Endothelial cell of umbilical vein (primary cell): ENCODE measurements at regions of chr16 and their contacts with region 1.

Region 1: GRCh38 chr16:15874745-15875314 is 13.6 kb downstream of the CEP20 start:
- DNase-seq: peak; percentile 84
- H3K4me3 ChIP-seq: no peak overlapping the region
- H3K27ac ChIP-seq: no peak overlapping the region
- H3K4me1 ChIP-seq: peaks cover 9% of the 10 kb centered on the region
- H3K27me3 ChIP-seq: no peaks in the 10 kb centered on the region
- CTCF ChIP-seq: peak; percentile 83 to 87
- POLR2A ChIP-seq: no peak

Region 2: DNA sequence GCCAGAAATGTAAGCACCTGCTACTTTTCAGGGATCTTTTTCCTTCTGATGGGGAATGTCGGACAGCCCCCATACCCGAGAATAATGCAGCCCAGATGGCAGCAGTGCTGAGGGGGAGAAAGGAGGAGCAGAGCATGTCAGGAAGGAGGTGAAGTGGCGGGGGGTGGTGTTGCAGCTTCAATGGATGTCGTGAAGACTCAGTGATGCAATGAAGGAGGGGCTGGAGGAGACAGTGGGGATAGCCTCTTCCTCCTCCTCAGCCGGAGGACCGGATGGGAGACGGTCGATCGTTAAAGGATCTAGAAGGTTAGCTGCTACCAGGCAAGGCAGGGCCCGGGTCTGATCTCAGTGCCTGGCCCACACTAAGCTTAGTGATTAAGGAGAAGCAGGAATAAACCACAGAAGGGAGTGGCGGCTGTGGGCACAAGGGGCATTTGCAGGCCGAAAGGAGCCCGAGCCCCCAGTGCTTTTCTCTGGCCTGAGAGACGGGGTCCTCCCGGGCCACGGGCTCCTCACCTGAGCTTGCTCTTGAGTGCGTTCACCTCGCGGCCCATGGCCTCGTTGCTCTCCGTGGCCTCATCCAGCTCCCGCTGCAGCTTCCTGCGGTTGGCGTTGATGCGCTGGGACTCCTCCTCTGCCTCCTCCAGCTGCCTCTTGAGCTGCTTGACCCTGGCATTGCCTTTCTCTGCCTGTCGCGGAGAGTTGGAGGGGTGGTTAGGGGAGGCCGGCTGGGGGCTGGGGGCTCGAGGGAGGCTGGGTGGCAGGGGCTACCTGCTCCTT is 160.2 kb before region 1 on chr16:
- CTCF ChIA-PET with region 1: no interaction called
- POLR2A ChIA-PET with region 1: no interaction called
- dilution Hi-C with region 1: no loop called
- intact Hi-C with region 1: no loop called
- DNase-seq: no peak
- H3K4me3 ChIP-seq: no peak overlapping the region
- H3K27ac ChIP-seq: no peak overlapping the region
- H3K4me1 ChIP-seq: no peaks in the 10 kb centered on the region
- H3K27me3 ChIP-seq: no peaks in the 10 kb centered on the region
- CTCF ChIP-seq: no peak
- POLR2A ChIP-seq: no peak

Region 3: GRCh38 chr16:15899538-15900100 is 24.8 kb after region 1 on chr16:
- CTCF ChIA-PET with region 1: interaction called, 17 read pairs
- POLR2A ChIA-PET with region 1: no interaction called
- dilution Hi-C with region 1: no loop called
- intact Hi-C with region 1: no loop called
- DNase-seq: no peak
- H3K4me3 ChIP-seq: no peak overlapping the region
- H3K27ac ChIP-seq: no peak overlapping the region
- H3K4me1 ChIP-seq: no peaks in the 10 kb centered on the region
- H3K27me3 ChIP-seq: no peaks in the 10 kb centered on the region
- CTCF ChIP-seq: no peak
- POLR2A ChIP-seq: no peak

Region 4: GRCh38 chr16:15996432-15997109 is 121.7 kb after region 1 on chr16:
- CTCF ChIA-PET with region 1: interaction called, 23 read pairs
- POLR2A ChIA-PET with region 1: no interaction called
- dilution Hi-C with region 1: no loop called
- intact Hi-C with region 1: no loop called
- DNase-seq: peak; percentile 89
- H3K4me3 ChIP-seq: no peak overlapping the region
- H3K27ac ChIP-seq: peak overlapping the region; percentile 91
- H3K4me1 ChIP-seq: peaks cover 50% of the 10 kb centered on the region
- H3K27me3 ChIP-seq: no peaks in the 10 kb centered on the region
- CTCF ChIP-seq: peak in 1 of 2 donors; percentile 7
- POLR2A ChIP-seq: peak; percentile 51

Region 5: GRCh38 chr16:16027728-16028310 is 153.0 kb after region 1 on chr16:
- CTCF ChIA-PET with region 1: interaction called, 37 read pairs
- POLR2A ChIA-PET with region 1: interaction called, 3 read pairs
- dilution Hi-C with region 1: no loop called
- intact Hi-C with region 1: loop called (anchors 5 kb)
- DNase-seq: peak; percentile 77
- H3K4me3 ChIP-seq: no peak overlapping the region
- H3K27ac ChIP-seq: peak overlapping the region; percentile 71
- H3K4me1 ChIP-seq: peaks cover 37% of the 10 kb centered on the region
- H3K27me3 ChIP-seq: no peaks in the 10 kb centered on the region
- CTCF ChIP-seq: no peak
- POLR2A ChIP-seq: no peak

Region 6: GRCh38 chr16:16062023-16062932 is 187.4 kb after region 1 on chr16:
- CTCF ChIA-PET with region 1: interaction called, 16 read pairs
- POLR2A ChIA-PET with region 1: no interaction called
- dilution Hi-C with region 1: no loop called
- intact Hi-C with region 1: no loop called
- DNase-seq: no peak
- H3K4me3 ChIP-seq: no peak overlapping the region
- H3K27ac ChIP-seq: no peak overlapping the region
- H3K4me1 ChIP-seq: no peaks in the 10 kb centered on the region
- H3K27me3 ChIP-seq: no peaks in the 10 kb centered on the region
- CTCF ChIP-seq: no peak
- POLR2A ChIP-seq: no peak

Region 7: DNA sequence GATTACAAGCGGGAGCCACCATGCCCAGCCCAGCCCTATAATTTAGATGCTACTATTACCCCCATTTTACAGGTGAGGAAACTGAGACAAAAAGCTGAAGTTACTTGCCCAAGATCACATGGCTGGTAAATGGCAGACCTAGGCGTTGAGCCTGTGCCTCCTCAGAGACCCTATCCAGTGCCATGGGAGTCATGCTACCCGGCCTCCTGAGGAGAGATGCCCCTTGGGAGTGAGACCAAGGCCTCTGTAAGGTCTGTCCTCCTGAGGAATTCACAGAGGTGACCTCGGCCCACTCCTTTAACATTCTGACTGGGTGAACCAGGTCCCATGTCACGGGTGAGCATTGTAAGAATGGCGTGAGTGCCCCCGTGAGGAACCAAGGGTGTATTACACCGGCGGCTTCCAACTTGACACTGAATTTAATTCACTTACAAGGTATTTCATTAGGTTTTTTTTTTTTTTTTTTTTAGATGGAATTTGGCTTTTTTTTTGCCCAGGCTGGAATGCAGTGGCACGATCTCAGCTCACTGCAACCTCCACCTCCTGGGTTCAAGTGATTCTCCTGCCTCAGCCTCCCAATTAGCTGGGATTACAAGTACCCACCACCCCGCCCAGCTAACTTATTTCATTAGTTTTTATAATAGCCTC is 252.8 kb after region 1 on chr16:
- CTCF ChIA-PET with region 1: interaction called, 28 read pairs
- POLR2A ChIA-PET with region 1: no interaction called
- dilution Hi-C with region 1: no loop called
- intact Hi-C with region 1: loop called (anchors 1 kb)
- DNase-seq: peak; percentile 77
- H3K4me3 ChIP-seq: no peak overlapping the region
- H3K27ac ChIP-seq: no peak overlapping the region
- H3K4me1 ChIP-seq: no peaks in the 10 kb centered on the region
- H3K27me3 ChIP-seq: no peaks in the 10 kb centered on the region
- CTCF ChIP-seq: peak; percentile 69 to 79
- POLR2A ChIP-seq: no peak

Region 8: DNA sequence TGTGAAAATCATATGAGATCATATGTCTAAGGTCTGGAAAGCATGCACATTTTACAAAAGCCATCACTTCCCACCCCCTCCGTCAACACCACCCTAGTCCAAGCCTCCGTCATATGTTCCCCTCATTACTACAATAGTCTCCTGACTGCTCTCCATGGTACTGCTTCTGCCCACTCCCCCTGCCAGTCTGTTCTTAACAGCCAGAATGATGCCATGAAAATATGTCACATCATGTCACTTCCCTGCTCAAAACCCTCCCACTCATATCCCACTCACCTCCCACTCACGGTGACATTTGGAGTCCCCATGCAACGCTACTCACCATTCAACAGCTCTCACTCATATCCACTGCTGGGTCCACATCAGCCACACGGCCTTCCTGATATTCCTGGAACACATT is 1163.6 kb after region 1 on chr16:
- CTCF ChIA-PET with region 1: no interaction called
- POLR2A ChIA-PET with region 1: no interaction called
- dilution Hi-C with region 1: no loop called
- intact Hi-C with region 1: no loop called
- DNase-seq: no peak
- H3K4me3 ChIP-seq: no peak overlapping the region
- H3K27ac ChIP-seq: no peak overlapping the region
- H3K4me1 ChIP-seq: no peaks in the 10 kb centered on the region
- H3K27me3 ChIP-seq: no peaks in the 10 kb centered on the region
- CTCF ChIP-seq: no peak
- POLR2A ChIP-seq: no peak